ENCODE measurements at regions of chrX and their contacts with region 1.

Region 1: DNA sequence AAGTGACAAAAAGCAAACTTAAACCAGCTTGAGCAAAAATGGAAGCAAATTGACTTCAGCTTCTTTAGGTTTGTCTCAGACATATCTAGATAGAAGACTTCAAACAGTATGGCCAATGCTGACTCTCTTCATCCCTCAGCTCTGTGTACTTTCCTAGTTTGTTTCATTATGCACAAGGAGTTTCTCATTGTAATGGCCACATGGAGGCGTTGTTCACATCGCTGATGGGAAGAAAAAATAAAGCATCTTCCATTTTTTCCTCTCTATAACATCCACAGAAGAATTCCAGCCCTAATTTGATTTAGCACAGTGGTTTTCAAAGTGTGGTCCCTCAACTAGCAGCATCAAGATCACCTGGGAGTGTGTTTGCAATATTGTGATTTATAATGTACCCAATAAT is 397.5 kb upstream of the PRKX start:
- DNase-seq: no peak
- H3K4me3 ChIP-seq: no peak overlapping the region
- H3K27ac ChIP-seq: no peak overlapping the region
- H3K4me1 ChIP-seq: no peaks in the 10 kb centered on the region
- CTCF ChIP-seq: 0 out of 2 replicates have a peak, but pooled peaks have one; percentile 30

Region 2: GRCh38 chrX:3788509-3789233 is 322.3 kb before region 1 on chrX:
- CTCF ChIA-PET with region 1: no interaction called
- POLR2A ChIA-PET with region 1: no interaction called
- intact Hi-C with region 1: loop called (anchors 10 kb)
- DNase-seq: no peak
- H3K4me3 ChIP-seq: no peak overlapping the region
- H3K27ac ChIP-seq: no peak overlapping the region
- H3K4me1 ChIP-seq: no peaks in the 10 kb centered on the region
- CTCF ChIP-seq: 0 out of 2 replicates have a peak, but pooled peaks have one; percentile 36

Measured in OCI-LY7 (cell line).